Gastrocnemius medialis (tissue), 4 donors: ENCODE measurements at regions of chr10 and their contacts with region 1.

Region 1: DNA sequence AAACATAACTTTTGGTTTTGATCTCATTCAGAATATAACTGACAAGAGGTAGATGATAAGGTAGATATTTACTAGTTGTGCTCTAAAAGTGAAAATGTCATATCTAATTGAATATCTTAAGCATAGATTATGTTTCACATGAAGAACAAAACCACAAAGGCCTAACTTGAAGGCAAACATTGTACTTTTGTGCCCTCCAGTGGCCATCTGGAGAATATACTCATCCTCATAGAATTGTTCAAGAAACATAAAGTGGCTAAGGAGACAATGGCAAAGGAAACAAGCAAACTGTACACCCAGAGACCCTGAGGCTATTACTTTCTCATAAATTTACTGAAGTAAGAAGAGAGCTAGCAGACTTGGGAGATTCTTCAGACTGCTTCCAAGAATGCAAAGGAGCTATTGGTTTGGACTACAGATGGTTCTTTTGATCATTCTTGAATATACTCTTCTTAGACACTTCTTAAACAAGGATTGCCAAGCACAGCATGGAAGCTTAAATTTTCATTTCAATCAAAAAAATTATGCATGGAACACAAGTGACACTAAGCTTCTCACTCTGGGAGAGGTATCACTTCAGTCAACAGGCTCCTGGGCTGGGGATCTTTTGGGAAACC is 98.2 kb upstream of the DKK1 start:
- DNase-seq: peak; percentile 22 to 25
- ATAC-seq: peak; percentile 51 to 53
- H3K4me3 ChIP-seq: no peak overlapping the region
- H3K27ac ChIP-seq: peak overlapping the region; percentile 58 to 85 (median 70)
- H3K4me1 ChIP-seq: peaks cover 23 to 51% of the 10 kb centered on the region in 2 donors
- H3K27me3 ChIP-seq: no peaks in the 10 kb centered on the region
- CTCF ChIP-seq: peak; percentile 65 to 93 (median 75)
- POLR2A ChIP-seq: no peak

Region 2: DNA sequence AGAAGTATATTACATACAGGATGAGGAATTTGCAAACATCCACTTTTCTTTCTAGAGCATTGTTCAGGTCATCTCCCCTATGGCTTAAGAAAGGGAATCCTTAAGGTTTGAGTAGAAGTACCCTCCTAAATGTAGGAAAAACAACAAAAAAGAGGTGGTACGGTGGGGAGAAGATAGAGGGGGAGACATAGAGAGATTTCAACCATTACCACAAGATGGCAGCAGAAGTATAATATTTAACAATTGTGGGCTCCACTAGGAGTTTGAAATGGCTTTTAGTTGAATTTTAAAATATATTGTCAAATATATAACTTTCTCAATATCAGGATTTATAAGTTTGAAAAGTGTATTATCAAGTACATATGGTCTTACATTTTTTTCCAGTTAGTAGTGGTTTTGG is 1214.3 kb before region 1 on chr10:
- in situ Hi-C with region 1: loop called in 3 of 4 experiments (anchors 10 to 25 kb)
- intact Hi-C with region 1: no loop called
- DNase-seq: no peak
- ATAC-seq: peak; percentile 50 to 72
- H3K4me3 ChIP-seq: no peak overlapping the region
- H3K27ac ChIP-seq: peak overlapping the region in 2 of 4 donors; percentile 1 to 25
- H3K4me1 ChIP-seq: peaks cover 43 to 65% of the 10 kb centered on the region in 2 donors
- H3K27me3 ChIP-seq: no peaks in the 10 kb centered on the region
- CTCF ChIP-seq: peak; percentile 45 to 66 (median 53)
- POLR2A ChIP-seq: no peak

Region 3: DNA sequence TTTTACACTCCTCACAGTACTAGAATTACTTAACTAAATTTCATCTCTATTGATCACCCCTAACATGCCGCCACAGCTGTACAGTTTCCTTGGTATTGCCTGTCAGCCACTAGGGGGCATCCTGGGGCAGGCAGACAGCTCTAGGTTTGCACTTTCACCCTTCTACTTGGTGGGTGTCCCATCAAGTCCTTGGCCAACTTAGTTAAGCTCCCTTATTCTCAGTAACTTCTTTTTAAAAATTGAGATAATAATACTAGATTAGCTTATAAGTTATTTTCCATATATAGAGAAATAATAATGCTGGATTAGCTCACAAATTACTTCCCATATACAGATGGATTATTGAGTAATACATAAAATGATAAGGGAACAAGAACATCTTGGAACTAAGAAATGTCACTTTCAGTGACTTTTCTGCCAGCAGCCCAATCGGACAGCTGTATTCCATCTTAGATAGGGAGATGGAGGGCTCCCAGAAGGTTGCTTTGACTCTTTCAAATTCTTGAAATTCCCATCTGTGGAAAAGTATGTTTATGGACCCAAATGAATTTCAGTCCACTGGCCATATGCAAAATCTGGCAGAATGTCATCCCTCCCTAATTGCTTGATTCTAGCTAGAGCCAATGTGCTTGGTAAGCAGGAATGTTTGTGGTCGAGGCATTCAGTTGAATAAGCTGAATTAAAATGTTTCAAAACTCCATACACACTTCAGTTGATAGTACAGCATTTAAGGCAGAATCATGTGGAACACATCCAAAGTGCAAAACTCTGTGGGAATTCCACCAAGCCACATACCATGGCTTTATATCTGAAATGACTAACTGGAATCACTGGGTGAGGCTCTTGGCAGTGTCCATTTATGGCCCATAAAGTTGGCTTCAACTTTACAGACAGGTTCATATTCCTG is 826.2 kb before region 1 on chr10:
- in situ Hi-C with region 1: no loop called
- intact Hi-C with region 1: loop called (anchors 10 kb)
- DNase-seq: no peak
- ATAC-seq: peak in 1 of 2 donors; percentile 30
- H3K4me3 ChIP-seq: no peak overlapping the region
- H3K27ac ChIP-seq: no peak overlapping the region
- H3K4me1 ChIP-seq: peaks cover 3 to 4% of the 10 kb centered on the region in 2 donors
- H3K27me3 ChIP-seq: no peaks in the 10 kb centered on the region
- CTCF ChIP-seq: peak; percentile 44 to 68 (median 59)
- POLR2A ChIP-seq: no peak

Region 4: GRCh38 chr10:51960494-51960895 is 255.4 kb before region 1 on chr10:
- in situ Hi-C with region 1: loop called in 2 of 4 experiments (anchors 5 to 25 kb)
- intact Hi-C with region 1: loop called (anchors 5 kb)
- DNase-seq: no peak
- ATAC-seq: peak; percentile 78 to 89
- H3K4me3 ChIP-seq: no peak overlapping the region
- H3K27ac ChIP-seq: no peak overlapping the region
- H3K4me1 ChIP-seq: peaks cover 4 to 12% of the 10 kb centered on the region in 2 donors
- H3K27me3 ChIP-seq: no peaks in the 10 kb centered on the region
- CTCF ChIP-seq: peak; percentile 35 to 61 (median 46)
- POLR2A ChIP-seq: no peak

Region 5: GRCh38 chr10:51986516-51986915 is 229.3 kb before region 1 on chr10:
- in situ Hi-C with region 1: no loop called
- intact Hi-C with region 1: no loop called
- DNase-seq: no peak
- ATAC-seq: peak; percentile 47 to 74
- H3K4me3 ChIP-seq: no peak overlapping the region
- H3K27ac ChIP-seq: peak overlapping the region in 1 of 4 donors; percentile 33
- H3K4me1 ChIP-seq: peaks cover 7 to 14% of the 10 kb centered on the region in 2 donors
- H3K27me3 ChIP-seq: no peaks in the 10 kb centered on the region
- CTCF ChIP-seq: no peak
- POLR2A ChIP-seq: no peak